ENCODE measurements at regions of chr6 and their contacts with region 1.

Region 1: DNA sequence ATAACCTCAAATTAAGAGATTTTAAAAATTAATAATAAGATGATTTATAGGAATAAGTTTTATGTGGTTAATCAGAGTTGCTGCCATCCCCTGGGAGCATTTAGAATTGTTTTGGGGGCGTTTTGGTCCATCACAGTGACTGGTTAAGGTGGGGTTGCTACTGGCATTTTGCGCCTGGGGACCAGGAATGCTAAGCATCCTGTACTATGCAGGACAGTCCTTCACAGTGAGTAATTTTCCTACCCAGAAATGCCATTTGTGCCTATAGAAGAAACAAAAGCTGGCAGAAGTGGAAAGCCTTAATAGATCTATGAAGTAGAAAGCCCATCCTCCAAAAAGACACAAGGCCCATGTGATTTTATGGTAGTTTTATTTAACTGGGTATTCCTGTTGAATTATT is 118.0 kb downstream of the ANKS1A start:
- DNase-seq: no peak
- ATAC-seq: no peak
- H3K4me3 ChIP-seq: no peak overlapping the region
- H3K27ac ChIP-seq: no peak overlapping the region
- H3K4me1 ChIP-seq: peaks cover 2% of the 10 kb centered on the region; the same call in 1 of the 2 replicates
- H3K27me3 ChIP-seq: no peaks in the 10 kb centered on the region
- CTCF ChIP-seq: no peak
- POLR2A ChIP-seq: no peak
- RAD21 ChIP-seq: no peak

Region 2: GRCh38 chr6:35108309-35108885 is 101.4 kb after region 1 on chr6:
- CTCF ChIA-PET with region 1: no interaction called
- POLR2A ChIA-PET with region 1: interaction called, 11 read pairs
- dilution Hi-C with region 1: no loop called
- in situ Hi-C with region 1: no loop called
- intact Hi-C with region 1: no loop called
- DNase-seq: no peak
- ATAC-seq: no peak
- H3K4me3 ChIP-seq: no peak overlapping the region
- H3K27ac ChIP-seq: no peak overlapping the region
- H3K4me1 ChIP-seq: no peaks in the 10 kb centered on the region
- H3K27me3 ChIP-seq: peaks cover 3% of the 10 kb centered on the region
- CTCF ChIP-seq: no peak
- POLR2A ChIP-seq: no peak
- RAD21 ChIP-seq: no peak

Measured in IMR-90 (cell line).